AG04449 (cell line): ENCODE measurements at regions of chr2 and their contacts with region 1.

Region 1: GRCh38 chr2:68751397-68752339 is 17.1 kb downstream of the ARHGAP25 start:
- DNase-seq: peak; percentile 31
- H3K4me3 ChIP-seq: no peak overlapping the region
- CTCF ChIP-seq: peak; percentile 94

Region 2: GRCh38 chr2:68467077-68467960 is 284.3 kb before region 1 on chr2 and contains the starts of genes APLF and FBXO48:
- CTCF ChIA-PET with region 1: interaction called, 15 read pairs
- POLR2A ChIA-PET with region 1: no interaction called
- DNase-seq: peak; percentile 95
- H3K4me3 ChIP-seq: peak within 1 kb of the TSS; percentile 99
- CTCF ChIP-seq: no peak

Region 3: DNA sequence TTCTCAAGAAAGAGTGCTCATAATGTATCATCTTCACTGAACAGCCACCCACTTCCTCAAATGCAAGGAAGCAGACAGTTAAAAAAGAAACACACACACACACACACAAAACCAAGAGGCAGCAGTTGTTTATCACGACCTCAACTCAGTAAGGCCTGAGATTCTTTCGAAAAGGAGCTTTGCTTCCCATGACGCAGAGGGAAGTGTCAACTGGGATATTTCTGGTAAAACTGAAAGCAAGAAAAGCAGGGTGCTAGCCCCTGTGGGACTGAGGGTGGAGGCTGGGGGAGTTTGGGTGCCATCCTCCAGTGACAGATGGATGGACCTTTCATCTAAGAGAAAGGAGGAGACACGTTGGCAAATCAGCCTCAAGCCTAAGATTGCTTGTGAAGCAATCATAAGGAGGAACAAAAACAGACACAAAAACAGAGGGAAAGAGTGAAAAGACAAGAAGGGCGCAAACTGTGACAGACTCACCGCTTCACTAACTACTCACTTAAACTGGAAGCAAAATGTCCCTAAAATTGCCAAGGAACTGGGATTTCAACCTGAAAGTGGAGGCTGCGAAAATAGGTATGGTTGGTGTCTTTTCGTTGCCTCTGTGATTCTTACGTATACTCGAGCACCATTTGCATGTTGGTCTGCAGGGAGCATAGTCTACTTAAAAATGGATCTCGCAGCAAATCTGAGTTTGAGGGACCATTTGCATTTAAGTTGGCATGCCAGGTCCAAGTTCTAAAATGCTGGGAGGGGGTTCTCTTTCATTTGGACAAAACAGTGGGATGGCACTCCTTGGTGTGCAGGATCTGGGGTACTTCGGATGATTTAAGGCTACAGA is 16.8 kb before region 1 on chr2 and contains the start of gene ARHGAP25:
- CTCF ChIA-PET with region 1: interaction called, 43 read pairs
- POLR2A ChIA-PET with region 1: no interaction called
- DNase-seq: no peak
- H3K4me3 ChIP-seq: no peak within 1 kb of the TSS
- CTCF ChIP-seq: no peak

Region 4: GRCh38 chr2:68789603-68790002 is 37.9 kb after region 1 on chr2:
- CTCF ChIA-PET with region 1: interaction called, 20 read pairs
- POLR2A ChIA-PET with region 1: no interaction called
- DNase-seq: no peak
- H3K4me3 ChIP-seq: no peak overlapping the region
- CTCF ChIP-seq: no peak

Region 5: GRCh38 chr2:68878753-68879152 is 127.1 kb after region 1 on chr2:
- CTCF ChIA-PET with region 1: interaction called, 11 read pairs
- POLR2A ChIA-PET with region 1: no interaction called
- DNase-seq: no peak
- H3K4me3 ChIP-seq: no peak overlapping the region
- CTCF ChIP-seq: no peak

Region 6: GRCh38 chr2:68918497-68918896 is 166.8 kb after region 1 on chr2:
- CTCF ChIA-PET with region 1: interaction called, 49 read pairs
- POLR2A ChIA-PET with region 1: no interaction called
- DNase-seq: no peak
- H3K4me3 ChIP-seq: no peak overlapping the region
- CTCF ChIP-seq: no peak

Region 7: DNA sequence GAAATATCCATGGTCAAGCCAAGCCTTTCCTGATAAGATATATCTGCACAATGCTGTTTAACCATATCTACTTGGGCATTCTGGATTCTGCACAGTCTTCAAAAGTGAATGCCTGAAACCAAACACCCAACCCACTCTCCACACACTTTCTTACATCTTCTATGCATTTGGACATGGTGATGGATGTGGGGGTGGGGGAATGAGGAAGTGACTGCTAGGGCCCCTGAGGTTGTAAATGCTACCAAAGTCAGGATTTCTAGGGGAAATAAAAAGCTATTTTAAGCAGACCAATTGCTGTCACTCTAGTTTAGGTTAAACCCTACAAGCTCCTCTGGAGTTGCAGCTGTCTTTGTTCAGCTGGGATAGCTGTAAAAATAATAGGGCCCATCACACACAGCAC is 1828.7 kb after region 1 on chr2:
- CTCF ChIA-PET with region 1: no interaction called
- POLR2A ChIA-PET with region 1: no interaction called
- DNase-seq: no peak
- H3K4me3 ChIP-seq: no peak overlapping the region
- CTCF ChIP-seq: no peak